ENCODE measurements at regions of chr4 and their contacts with region 1.

Region 1: DNA sequence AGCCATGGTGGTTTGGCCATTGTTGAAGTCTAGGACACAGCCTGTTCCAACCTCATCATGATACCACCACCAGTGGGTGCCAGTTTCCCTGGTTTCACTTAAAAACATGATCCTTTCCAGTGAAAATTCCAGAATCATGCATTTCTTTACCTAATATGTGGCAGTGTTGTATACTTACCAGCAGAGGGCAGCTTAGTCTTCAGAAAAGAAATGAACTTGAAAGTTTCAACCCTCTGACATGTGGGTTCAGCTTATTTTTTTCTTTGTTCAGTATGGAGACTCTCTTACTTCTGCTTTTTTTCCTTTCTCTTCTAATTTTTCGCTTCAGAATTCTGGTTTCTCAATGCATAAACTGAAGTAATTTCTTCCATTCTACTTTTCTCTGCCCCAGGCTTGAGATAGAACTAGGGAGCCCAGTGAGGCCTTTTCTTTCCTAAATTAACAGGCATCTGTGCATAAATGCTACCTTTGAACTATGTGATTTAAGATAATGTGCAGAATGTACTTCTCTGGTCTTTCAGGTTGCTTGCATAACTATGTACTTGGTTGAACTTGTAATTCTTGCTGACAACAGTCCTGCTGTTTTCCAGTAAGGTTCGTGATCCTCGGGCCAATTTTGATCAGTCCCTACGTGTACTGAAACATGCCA is 10.7 kb downstream of the LIAS start:
- DNase-seq: peak; percentile 67
- H3K4me3 ChIP-seq: no peak overlapping the region
- CTCF ChIP-seq: peak; percentile 61

Region 2: DNA sequence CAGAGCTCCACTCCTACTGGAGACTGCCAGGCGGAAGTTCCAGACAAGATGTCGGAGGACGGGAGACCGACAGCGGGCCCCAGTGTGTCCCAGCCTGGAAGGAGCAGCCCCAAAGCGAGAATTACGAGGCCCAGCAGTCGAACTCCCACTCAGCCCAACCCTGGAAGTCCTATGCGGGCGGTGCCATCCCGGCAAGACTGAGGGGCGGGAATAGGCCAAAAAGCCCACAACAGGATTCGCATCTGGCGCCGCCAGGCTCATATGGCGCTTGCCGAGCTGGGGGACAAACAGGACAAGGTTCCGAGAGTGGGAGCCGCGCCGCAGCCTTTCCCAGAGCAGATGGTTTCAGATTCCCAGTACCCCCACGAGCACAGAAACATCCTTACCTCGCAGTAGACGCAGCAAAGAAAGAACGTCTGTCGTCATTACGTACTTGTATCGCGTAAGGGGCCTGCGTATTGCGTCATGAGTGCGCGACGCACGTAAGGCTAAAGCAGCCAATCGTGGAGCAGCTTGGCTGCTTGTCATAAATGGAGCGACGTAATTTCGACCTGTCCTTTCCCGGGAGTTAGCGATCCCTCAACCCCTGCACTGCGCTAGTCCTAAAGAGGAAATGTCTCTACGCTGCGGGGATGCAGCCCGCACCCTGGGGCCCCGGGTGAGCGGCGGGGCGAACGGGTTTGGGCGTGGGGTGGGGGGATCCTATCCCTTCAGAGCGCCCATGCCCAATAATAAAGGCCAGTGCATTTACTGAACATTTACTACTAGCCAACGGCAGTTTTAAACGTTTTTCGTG is 10.8 kb before region 1 on chr4 and contains the starts of genes LIAS and RPL9:
- CTCF ChIA-PET with region 1: interaction called, 20 read pairs
- POLR2A ChIA-PET with region 1: interaction called, 3 read pairs
- DNase-seq: peak; percentile 99
- H3K4me3 ChIP-seq: peak within 1 kb of the TSS; percentile 91
- CTCF ChIP-seq: no peak

Region 3: GRCh38 chr4:39527273-39528060 is 57.9 kb after region 1 on chr4 and contains the start of gene UGDH:
- CTCF ChIA-PET with region 1: interaction called, 21 read pairs
- POLR2A ChIA-PET with region 1: interaction called, 10 read pairs
- DNase-seq: peak; percentile 93
- H3K4me3 ChIP-seq: peak within 1 kb of the TSS; percentile 93
- CTCF ChIP-seq: no peak

Region 4: GRCh38 chr4:39638354-39639240 is 169.0 kb after region 1 on chr4 and contains the start of gene SMIM14:
- CTCF ChIA-PET with region 1: interaction called, 53 read pairs
- POLR2A ChIA-PET with region 1: interaction called, 7 read pairs
- DNase-seq: peak; percentile 86
- H3K4me3 ChIP-seq: peak within 1 kb of the TSS; percentile 86
- CTCF ChIP-seq: peak; percentile 8

Region 5: DNA sequence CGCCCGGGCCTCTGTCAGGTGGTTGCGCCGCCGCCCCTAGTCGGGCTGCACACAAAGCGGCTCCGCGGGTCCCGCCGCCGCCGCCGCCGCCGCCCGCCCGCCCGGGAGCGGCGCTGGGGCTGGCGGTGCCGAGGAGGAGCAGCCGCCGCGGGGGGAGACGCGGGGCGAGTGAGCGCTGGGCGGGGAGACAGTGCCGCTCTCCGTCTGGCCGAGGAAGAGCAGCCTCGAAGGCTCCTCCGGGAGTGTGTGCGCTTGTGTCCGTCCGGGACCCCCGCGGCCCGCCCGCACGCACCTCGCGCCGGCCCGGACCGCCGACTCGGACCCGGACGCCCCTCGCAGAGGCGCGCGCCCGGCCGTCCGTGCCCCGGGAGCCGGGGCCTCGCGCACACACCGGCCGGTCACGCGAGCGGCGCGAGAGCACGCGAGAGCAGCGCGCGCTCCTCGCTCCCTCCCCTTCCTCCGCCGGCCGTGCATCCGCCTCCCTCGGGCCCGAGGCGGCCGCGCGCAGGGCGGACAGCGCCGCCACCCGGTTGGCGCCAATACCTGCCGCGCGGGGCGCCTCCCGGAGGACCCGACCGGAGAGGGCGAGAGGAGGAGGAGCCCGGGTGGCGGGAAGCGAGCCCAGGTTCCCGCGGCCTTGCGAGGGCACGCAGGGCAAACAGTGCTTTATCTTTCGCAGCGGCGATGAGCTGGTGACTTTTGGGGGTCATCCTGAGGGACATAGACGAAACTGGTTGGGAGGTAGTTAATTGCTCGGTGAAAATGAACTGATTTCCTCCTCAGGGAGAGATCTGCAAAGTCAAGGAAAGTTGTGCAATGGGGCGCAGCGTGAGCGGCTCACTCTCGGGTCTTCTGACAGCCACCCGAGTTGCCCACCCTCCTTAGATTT is 508.2 kb after region 1 on chr4 and contains the start of gene PDS5A:
- CTCF ChIA-PET with region 1: interaction called, 24 read pairs
- POLR2A ChIA-PET with region 1: no interaction called
- DNase-seq: no peak
- H3K4me3 ChIP-seq: peak within 1 kb of the TSS; percentile 80
- CTCF ChIP-seq: peak; percentile 86